SK-MEL-5 (cell line): ENCODE measurements at regions of chr6 and their contacts with region 1.

Region 1: DNA sequence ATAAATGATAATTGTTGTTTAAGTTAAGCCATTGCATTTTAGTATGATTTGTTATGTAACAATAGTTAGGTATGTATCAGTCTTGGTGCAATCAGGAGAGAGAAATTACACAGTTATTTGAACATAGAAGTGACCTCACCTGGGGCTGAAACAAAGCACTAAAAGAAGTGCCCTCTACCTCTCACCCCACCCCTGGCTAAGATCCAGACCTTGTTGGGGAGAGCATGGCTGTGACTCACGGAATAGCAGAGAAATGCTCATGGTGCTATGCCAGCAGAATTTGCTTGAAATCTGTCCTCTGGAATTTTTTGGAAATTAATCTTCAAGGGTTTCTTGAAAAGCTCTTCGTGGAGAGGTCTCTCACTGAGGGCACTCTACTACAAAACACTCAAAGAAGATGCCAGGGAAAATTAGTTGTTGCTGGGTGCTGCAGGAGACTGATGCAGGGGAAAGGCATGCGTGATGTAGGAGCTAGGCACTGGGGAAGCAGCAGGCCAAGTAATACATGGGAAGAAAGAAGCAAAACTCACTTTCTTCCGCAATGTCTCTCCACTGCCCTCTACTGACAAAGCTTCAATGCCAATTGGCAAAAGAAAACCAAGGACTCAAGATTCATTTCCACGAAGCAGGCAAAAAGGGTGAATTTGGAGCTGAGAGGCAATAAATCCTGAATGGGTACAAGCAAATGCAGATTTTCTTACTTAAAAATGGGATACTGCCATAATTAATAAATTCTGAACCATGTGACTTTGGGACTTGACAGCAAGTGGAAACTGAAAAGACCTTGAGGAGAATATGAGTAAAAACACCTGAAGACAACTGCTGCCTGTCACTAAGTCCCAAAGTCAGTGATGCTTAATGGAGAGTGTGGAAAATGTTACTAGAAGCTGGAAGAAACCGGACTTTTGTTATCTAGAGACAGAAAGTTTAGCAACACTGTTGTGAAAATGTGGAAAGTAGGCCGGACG is 136.3 kb upstream of the ZNF184 start:
- DNase-seq: peak; percentile 97

Region 2: DNA sequence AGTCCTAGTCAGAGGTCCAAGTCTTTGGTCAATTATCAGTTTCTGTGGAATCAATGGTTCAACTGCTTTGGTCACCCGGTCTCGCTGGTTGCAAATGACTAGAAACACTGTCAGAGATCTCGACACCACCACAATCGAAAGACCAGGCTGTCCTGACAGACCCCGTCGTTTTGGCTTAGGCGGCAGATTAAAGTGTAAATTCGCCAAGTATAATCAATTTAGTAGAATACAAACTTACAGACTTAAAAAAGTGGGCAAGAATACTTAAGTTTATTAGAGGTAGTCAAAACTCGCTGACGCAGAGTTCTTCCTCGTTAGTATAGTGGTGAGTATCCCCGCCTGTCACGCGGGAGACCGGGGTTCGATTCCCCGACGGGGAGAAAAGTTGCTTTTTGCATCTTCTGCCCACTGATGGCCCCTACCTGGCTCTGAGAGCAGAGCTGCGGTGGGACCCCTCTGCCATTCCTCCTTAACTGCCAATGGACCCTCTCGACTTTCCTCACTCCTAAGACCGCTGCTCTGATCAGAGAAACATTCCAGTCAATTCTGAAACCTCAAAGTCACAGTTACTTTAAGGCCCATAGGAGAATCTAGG is 105.7 kb before region 1 on chr6:
- in situ Hi-C with region 1: loop called (anchors 10 kb)
- DNase-seq: peak; percentile 89

Region 3: DNA sequence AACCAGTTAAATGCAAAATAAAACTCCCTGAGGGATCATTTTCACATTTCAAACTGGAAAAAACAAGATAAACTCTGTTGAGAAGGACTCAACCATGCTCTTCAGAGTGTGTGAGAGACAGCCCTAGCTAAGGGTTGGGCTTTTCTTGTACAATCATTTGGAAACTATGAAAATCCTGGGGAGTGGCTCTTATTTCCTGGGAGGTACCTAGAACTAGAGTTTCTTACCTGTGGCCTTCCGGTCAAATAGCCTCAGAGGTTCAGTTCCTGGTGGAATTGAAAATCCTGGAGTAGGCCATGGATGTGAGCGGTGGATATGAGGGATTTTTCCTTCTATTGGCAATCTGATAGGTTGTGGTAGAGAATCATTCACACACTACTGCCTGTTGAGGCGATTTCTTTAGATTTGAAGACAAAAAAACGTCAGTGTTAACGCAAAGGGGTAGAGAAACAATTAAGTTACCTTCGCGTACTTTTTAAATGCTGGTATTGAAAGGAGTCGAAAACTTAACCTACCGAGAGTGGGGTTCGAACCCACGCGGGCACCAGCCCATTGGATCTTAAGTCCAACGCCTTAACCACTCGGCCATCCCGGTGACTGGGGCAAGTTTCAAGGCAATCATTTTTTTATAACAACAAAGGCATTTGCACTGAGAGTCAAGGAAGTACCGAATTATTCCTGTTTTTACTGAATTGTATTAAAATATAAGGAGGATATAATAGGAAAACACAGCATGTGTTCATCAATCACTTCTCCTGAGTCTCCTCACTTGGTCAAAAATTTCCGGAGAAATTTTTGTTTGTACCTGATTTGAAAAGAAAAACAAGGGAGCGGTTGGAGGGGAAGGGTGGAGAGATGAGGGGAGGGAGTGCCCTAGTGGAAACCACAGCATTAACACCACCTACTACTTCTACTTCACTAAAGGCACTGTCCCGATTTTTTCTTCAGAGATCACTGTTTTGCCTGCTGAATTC is 111.7 kb after region 1 on chr6:
- in situ Hi-C with region 1: no loop called
- DNase-seq: peak; percentile 91